ENCODE measurements at regions of chr20 and their contacts with region 1.

Region 1: GRCh38 chr20:62136283-62137091 is 6.7 kb downstream of the PSMA7 start:
- DNase-seq: peak; percentile 55 to 87 (median 71)
- ATAC-seq: peak; percentile 73 to 80 (median 76)
- H3K4me3 ChIP-seq: no peak overlapping the region
- H3K4me3 Mint-ChIP-seq: no peak overlapping the region
- H3K27ac ChIP-seq: no peak overlapping the region
- H3K27ac Mint-ChIP-seq: peak overlapping the region; percentile 77 to 87
- H3K4me1 ChIP-seq: peaks cover 7 to 42% of the 10 kb centered on the region in 2 experiments
- H3K4me1 Mint-ChIP-seq: peaks cover 36 to 47% (median 42%) of the 10 kb centered on the region in 3 donors
- H3K27me3 ChIP-seq: no peaks in the 10 kb centered on the region
- H3K27me3 Mint-ChIP-seq: no peaks in the 10 kb centered on the region

Region 2: DNA sequence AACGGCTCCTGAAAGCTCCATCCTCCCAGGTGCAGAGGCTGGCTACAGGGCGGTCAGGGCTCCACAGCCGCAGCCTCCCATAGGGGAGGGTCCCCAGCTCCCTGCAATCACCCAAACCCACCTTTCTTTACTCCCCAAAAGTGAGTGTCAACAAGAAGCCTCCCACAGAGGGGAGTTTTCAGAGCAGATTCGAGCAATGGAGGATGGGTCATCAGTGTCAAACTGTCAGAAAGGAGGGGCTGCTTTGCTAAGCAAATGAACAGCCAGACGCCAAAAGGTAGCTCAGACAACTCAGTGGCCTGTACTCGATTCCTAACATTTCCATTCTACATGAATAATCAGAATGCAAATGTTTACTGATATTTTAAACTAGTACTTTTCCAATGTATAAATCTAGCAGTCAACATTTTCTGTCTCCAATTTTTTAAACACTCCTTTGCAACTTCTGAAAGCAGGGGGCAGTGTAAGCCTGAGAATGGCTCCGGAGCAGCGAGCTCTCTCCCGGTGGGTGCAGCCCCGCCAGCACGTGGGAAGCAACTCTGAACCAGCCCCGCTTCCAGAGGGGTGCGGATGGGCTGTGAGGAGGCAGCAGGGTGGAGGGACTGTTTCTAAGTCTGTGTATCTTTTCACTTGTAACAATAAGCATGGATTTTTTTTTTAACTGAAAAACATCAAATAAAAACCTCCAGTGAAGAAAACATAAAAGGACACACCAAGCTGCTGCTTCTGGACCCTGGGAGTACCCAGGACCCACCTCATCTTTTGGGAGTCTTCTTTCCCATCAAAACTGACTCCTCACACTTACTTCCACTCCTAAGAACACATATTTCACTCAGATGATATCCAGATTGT is 125.7 kb before region 1 on chr20:
- CTCF ChIA-PET with region 1: interaction called, 8 to 15 read pairs
- POLR2A ChIA-PET with region 1: interaction called in 1 of 2 experiments, 5 read pairs
- DNase-seq: peak; percentile 32 to 79 (median 55)
- ATAC-seq: peak; percentile 69 to 95 (median 72)
- H3K4me3 ChIP-seq: no peak overlapping the region
- H3K4me3 Mint-ChIP-seq: no peak overlapping the region
- H3K27ac ChIP-seq: no peak overlapping the region
- H3K27ac Mint-ChIP-seq: peak overlapping the region; percentile 32 to 34
- H3K4me1 ChIP-seq: peaks cover 0 to 19% of the 10 kb centered on the region in 2 experiments
- H3K4me1 Mint-ChIP-seq: peaks cover 7 to 15% (median 9%) of the 10 kb centered on the region in 3 donors
- H3K27me3 ChIP-seq: no peaks in the 10 kb centered on the region
- H3K27me3 Mint-ChIP-seq: no peaks in the 10 kb centered on the region